B cell (primary cell): ENCODE measurements at regions of chr17 and their contacts with region 1.

Region 1: GRCh38 chr17:28854457-28855350 is at the start of gene ERAL1:
- DNase-seq: peak; percentile 88
- ATAC-seq: peak; percentile 99
- H3K4me3 ChIP-seq: peak within 1 kb of the TSS; percentile 61 to 93 (median 82)
- H3K4me3 Mint-ChIP-seq: peak within 1 kb of the TSS; percentile 96
- H3K27ac ChIP-seq: peak within 1 kb of the TSS; percentile 59 to 75
- H3K27ac Mint-ChIP-seq: peak within 1 kb of the TSS; percentile 90
- H3K4me1 ChIP-seq: peaks cover 10 to 16% of the 10 kb centered on the region in 2 donors
- H3K4me1 Mint-ChIP-seq: peaks cover 17% of the 10 kb centered on the region
- H3K27me3 ChIP-seq: no peaks in the 10 kb centered on the region
- H3K27me3 Mint-ChIP-seq: no peaks in the 10 kb centered on the region
- CTCF ChIP-seq: no peak
- total RNA-seq, gene ERAL1: 35.9 and 39.5 TPM in 2 replicates

Region 2: DNA sequence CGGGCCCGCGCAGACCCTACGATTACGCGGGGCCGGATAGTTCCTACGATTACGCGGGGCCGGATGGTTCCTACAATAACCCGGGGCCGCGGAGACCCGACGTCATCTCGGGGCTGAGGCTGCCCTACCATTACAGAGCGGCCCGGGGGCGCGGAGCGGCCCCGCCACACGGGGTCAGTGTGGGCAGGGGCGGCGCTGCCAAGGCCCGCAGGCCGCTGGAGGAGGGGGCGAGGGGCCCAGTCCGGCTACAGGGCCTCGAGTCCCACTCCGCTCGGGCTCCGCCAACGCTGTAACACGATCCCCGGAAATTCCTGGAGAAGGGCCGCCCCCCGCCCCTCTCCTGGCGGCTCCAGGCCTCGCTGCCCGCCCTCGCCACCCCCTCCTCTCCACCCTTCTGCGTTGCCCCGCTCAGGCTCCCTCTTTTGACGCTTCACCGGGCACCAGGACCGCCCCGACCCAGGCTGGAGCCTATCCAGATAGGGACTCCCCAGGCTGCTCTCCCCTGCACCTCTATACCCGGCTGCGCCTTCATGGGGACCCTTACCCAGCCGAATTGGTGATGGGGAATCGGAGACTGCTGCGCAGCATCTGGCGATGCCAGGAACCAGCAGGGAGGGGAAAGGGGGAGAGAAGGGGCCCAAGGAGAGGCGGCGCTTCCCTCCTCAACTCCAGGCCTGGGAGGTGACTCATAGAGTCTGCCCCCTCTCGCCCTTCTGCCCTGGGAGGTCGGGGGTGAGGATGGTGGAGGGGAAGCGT is 136.9 kb before region 1 on chr17 and contains the start of gene RAB34:
- CTCF ChIA-PET with region 1: no interaction called
- POLR2A ChIA-PET with region 1: no interaction called
- intact Hi-C with region 1: loop called (anchors 2 kb)
- DNase-seq: peak; percentile 70
- ATAC-seq: peak; percentile 18
- H3K4me3 ChIP-seq: peak within 1 kb of the TSS in 4 of 5 experiments; percentile 46 to 61 (median 52)
- H3K4me3 Mint-ChIP-seq: peak within 1 kb of the TSS; percentile 86
- H3K27ac ChIP-seq: peak within 1 kb of the TSS; percentile 56 to 71
- H3K27ac Mint-ChIP-seq: peak within 1 kb of the TSS; percentile 89
- H3K4me1 ChIP-seq: peaks cover 44 to 57% of the 10 kb centered on the region in 2 donors
- H3K4me1 Mint-ChIP-seq: peaks cover 45% of the 10 kb centered on the region
- H3K27me3 ChIP-seq: peaks cover 0 to 8% (median 2%) of the 10 kb centered on the region in 4 experiments
- H3K27me3 Mint-ChIP-seq: no peaks in the 10 kb centered on the region
- CTCF ChIP-seq: no peak
- total RNA-seq, gene RAB34: 18.0 and 20.5 TPM in 2 replicates

Region 3: GRCh38 chr17:28812091-28812747 is 42.5 kb before region 1 on chr17:
- CTCF ChIA-PET with region 1: no interaction called
- POLR2A ChIA-PET with region 1: no interaction called
- intact Hi-C with region 1: loop called (anchors 1 kb)
- DNase-seq: peak; percentile 95
- ATAC-seq: peak; percentile 99
- H3K4me3 ChIP-seq: peak overlapping the region; percentile 48 to 92 (median 77)
- H3K4me3 Mint-ChIP-seq: peak overlapping the region; percentile 92
- H3K27ac ChIP-seq: peak overlapping the region; percentile 87
- H3K27ac Mint-ChIP-seq: peak overlapping the region; percentile 92
- H3K4me1 ChIP-seq: peaks cover 12 to 16% of the 10 kb centered on the region in 2 donors
- H3K4me1 Mint-ChIP-seq: peaks cover 34% of the 10 kb centered on the region
- H3K27me3 ChIP-seq: no peaks in the 10 kb centered on the region
- H3K27me3 Mint-ChIP-seq: no peaks in the 10 kb centered on the region
- CTCF ChIP-seq: no peak

Region 4: DNA sequence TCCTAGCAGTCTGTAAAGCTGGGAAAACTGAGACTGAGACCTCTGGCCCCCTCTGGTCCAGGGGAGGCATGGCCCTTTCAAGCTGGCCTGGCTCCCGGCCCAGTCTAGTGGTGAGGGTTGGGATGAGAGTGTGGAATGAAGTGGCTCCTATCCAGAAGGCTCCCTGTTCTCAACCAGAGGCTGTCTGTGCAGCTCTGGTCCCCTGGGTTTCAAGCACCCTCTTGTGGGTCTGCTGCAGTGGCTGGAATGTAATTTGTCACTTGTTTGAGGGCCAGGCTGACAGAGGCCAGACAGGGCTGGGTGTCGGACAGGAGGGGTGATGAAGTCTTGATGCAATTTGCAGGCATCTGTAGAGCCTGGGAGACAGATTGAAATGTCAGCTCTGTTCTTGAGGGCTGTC is 118.7 kb after region 1 on chr17:
- CTCF ChIA-PET with region 1: no interaction called
- POLR2A ChIA-PET with region 1: no interaction called
- intact Hi-C with region 1: no loop called
- DNase-seq: no peak
- ATAC-seq: no peak
- H3K4me3 ChIP-seq: no peak overlapping the region
- H3K4me3 Mint-ChIP-seq: no peak overlapping the region
- H3K27ac ChIP-seq: no peak overlapping the region
- H3K27ac Mint-ChIP-seq: no peak overlapping the region
- H3K4me1 ChIP-seq: no peaks in the 10 kb centered on the region
- H3K4me1 Mint-ChIP-seq: no peaks in the 10 kb centered on the region
- H3K27me3 ChIP-seq: peaks cover 0 to 7% (median 0%) of the 10 kb centered on the region in 4 experiments
- H3K27me3 Mint-ChIP-seq: peaks cover 10% of the 10 kb centered on the region
- CTCF ChIP-seq: no peak

Region 5: GRCh38 chr17:29032013-29032856 is 177.5 kb after region 1 on chr17:
- CTCF ChIA-PET with region 1: no interaction called
- POLR2A ChIA-PET with region 1: no interaction called
- intact Hi-C with region 1: no loop called
- DNase-seq: no peak
- ATAC-seq: no peak
- H3K4me3 ChIP-seq: no peak overlapping the region
- H3K4me3 Mint-ChIP-seq: no peak overlapping the region
- H3K27ac ChIP-seq: no peak overlapping the region
- H3K27ac Mint-ChIP-seq: no peak overlapping the region
- H3K4me1 ChIP-seq: no peaks in the 10 kb centered on the region
- H3K4me1 Mint-ChIP-seq: no peaks in the 10 kb centered on the region
- H3K27me3 ChIP-seq: peaks cover 0 to 45% (median 12%) of the 10 kb centered on the region in 4 experiments
- H3K27me3 Mint-ChIP-seq: peaks cover 64% of the 10 kb centered on the region
- CTCF ChIP-seq: no peak